ENCODE measurements at regions of chr14 and their contacts with region 1.

Region 1: DNA sequence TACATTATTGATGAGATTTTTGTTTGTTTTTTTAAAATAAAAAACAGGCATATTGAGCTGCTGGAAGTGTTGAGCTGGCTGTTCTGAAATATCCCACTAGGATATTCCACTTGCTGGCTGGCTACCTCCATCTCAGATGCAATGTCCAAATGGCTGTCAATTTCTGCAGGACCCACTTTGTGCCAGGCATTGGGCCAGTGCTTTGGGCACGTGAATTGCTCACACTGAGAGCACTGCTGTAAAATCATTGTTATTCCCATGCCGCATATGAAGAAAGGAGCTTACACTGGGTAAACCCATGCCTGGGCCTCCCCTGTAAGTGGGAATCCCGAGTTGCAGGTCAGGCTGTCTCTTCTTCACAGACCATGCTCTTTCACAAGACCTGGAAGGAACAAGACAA is 56.7 kb downstream of the RGS6 start:
- DNase-seq: no peak
- H3K4me3 ChIP-seq: no peak overlapping the region
- H3K27ac ChIP-seq: no peak overlapping the region
- H3K4me1 ChIP-seq: no peaks in the 10 kb centered on the region
- H3K27me3 ChIP-seq: no peaks in the 10 kb centered on the region
- CTCF ChIP-seq: no peak
- POLR2A ChIP-seq: no peak

Region 2: GRCh38 chr14:72000907-72001306 is 12.0 kb after region 1 on chr14:
- intact Hi-C with region 1: loop called (anchors 1 kb)
- DNase-seq: no peak
- H3K4me3 ChIP-seq: no peak overlapping the region
- H3K27ac ChIP-seq: peak overlapping the region in 1 of 2 donors; percentile 19
- H3K4me1 ChIP-seq: no peaks in the 10 kb centered on the region
- H3K27me3 ChIP-seq: no peaks in the 10 kb centered on the region
- CTCF ChIP-seq: no peak
- POLR2A ChIP-seq: no peak

Measured in breast epithelium (tissue), 4 donors.